ENCODE measurements at regions of chr12 and their contacts with region 1.

Region 1: GRCh38 chr12:123043536-123044001 is 63.1 kb downstream of the ARL6IP4 start:
- DNase-seq: peak; percentile 91
- H3K4me3 Mint-ChIP-seq: no peak overlapping the region
- H3K27ac Mint-ChIP-seq: no peak overlapping the region
- H3K4me1 Mint-ChIP-seq: no peaks in the 10 kb centered on the region
- H3K27me3 Mint-ChIP-seq: no peaks in the 10 kb centered on the region
- CTCF ChIP-seq: peak; percentile 60

Region 2: GRCh38 chr12:122917504-122918121 is 126.0 kb before region 1 on chr12:
- CTCF ChIA-PET with region 1: no interaction called
- intact Hi-C with region 1: no loop called
- DNase-seq: peak; percentile 51
- H3K4me3 Mint-ChIP-seq: no peak overlapping the region
- H3K27ac Mint-ChIP-seq: no peak overlapping the region
- H3K4me1 Mint-ChIP-seq: peaks cover 50% of the 10 kb centered on the region
- H3K27me3 Mint-ChIP-seq: no peaks in the 10 kb centered on the region
- CTCF ChIP-seq: no peak

Region 3: DNA sequence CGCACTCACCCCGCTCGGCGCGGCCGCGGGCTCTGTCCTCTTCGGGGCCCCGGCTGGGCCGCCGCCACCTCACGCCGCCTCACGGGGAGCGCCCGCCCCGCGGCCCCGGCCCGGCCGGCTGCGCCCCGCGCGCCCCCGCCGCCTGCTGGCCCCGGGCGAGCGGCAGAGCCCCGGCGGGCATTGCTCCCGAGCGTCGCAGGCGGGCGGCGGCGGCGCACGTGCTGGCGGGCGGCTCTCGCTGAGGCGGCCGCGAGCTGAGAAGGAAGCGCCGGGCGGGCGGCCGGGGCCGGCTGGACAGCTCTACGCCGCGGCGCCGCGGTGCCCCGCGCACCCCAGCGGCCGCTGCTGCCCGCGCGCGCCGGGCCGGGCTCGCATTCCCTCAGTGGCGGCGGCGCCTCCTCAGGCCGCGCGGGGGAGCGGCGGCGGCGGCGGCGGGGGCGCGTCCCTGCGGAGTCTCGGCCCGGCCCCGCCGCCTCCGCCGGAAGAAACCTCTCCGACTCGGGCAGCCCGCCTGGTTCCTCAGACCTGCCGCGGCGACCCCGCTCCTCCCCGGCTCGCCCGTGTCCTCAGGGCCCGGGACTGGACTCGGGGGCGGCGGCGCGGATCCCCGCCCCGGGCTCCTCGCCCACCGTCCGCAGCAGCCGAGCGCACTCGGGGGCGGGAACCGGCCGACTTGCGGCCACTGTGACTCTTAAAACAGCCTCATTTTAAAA is 107.3 kb after region 1 on chr12 and contains the start of gene PITPNM2:
- CTCF ChIA-PET with region 1: interaction called, 10 read pairs
- intact Hi-C with region 1: no loop called
- DNase-seq: peak; percentile 82
- H3K4me3 Mint-ChIP-seq: peak within 1 kb of the TSS; percentile 75
- H3K27ac Mint-ChIP-seq: peak within 1 kb of the TSS; percentile 18
- H3K4me1 Mint-ChIP-seq: peaks cover 18% of the 10 kb centered on the region
- H3K27me3 Mint-ChIP-seq: no peaks in the 10 kb centered on the region
- CTCF ChIP-seq: no peak
- total RNA-seq, gene PITPNM2: 7.8 and 8.4 TPM in 2 replicates

Region 4: GRCh38 chr12:123163227-123163626 is 119.7 kb after region 1 on chr12:
- CTCF ChIA-PET with region 1: interaction called, 7 read pairs
- intact Hi-C with region 1: loop called (anchors 5 kb)
- DNase-seq: no peak
- H3K4me3 Mint-ChIP-seq: no peak overlapping the region
- H3K27ac Mint-ChIP-seq: peak overlapping the region; percentile 71
- H3K4me1 Mint-ChIP-seq: peaks cover 40% of the 10 kb centered on the region
- H3K27me3 Mint-ChIP-seq: no peaks in the 10 kb centered on the region
- CTCF ChIP-seq: no peak